ENCODE measurements at regions of chr12 and their contacts with region 1.

Region 1: DNA sequence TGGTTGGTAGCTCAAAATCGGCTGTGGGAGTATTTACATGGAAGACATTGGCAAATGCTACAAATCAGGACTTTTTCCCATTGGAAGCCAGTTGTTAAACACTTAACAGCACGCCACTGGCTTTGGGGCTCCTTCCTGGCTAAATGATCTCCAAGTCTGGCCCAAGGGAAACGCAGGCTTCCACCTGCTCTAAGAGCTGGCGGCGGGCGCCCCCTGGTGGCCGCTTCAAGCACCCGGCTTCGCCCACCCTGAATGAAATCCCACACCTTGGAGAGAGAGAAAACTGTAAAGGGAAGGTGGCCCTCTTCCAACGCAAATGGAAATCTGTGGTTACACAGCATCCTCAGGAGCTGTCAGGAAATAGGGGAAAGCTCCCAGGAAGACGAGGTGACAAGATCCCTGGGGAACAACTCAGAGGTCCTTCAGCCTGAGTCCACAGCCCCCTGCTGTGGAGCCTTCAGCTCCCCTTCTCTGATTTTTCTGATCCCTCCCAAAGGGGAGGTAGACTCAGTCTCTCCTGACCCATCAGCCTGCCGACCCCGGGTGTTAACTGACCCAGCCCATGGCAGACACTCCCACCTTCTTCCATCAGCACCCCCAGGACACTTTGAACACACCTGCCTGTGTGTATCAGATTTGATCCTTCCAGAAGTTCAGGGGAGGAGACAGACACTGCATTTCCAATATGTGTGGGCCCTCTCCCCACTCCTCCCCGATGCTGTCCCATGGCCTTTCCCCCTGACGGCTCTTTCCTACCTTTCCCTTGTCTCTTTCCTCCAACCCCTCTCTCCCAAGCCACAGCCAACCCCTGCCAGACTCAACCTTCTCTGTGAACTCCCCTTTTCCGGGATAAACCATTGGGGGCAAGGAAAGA is 15.4 kb downstream of the SELPLG start:
- DNase-seq: peak; percentile 68 to 82 (median 75)
- H3K4me3 ChIP-seq: no peak overlapping the region
- H3K4me3 Mint-ChIP-seq: peak overlapping the region; percentile 9 to 50 (median 37)
- H3K27ac ChIP-seq: no peak overlapping the region
- H3K27ac Mint-ChIP-seq: peak overlapping the region; percentile 83 to 100 (median 96)
- H3K4me1 ChIP-seq: peaks cover 56% of the 10 kb centered on the region
- H3K4me1 Mint-ChIP-seq: peaks cover 62 to 83% (median 70%) of the 10 kb centered on the region in 3 donors
- H3K27me3 ChIP-seq: no peaks in the 10 kb centered on the region
- H3K27me3 Mint-ChIP-seq: no peaks in the 10 kb centered on the region

Region 2: GRCh38 chr12:108562348-108563135 is 55.8 kb before region 1 on chr12 and contains the start of gene ISCU:
- CTCF ChIA-PET with region 1: interaction called, 206 read pairs
- POLR2A ChIA-PET with region 1: interaction called, 34 read pairs
- DNase-seq: peak; percentile 98 to 100 (median 99)
- H3K4me3 ChIP-seq: peak within 1 kb of the TSS; percentile 96
- H3K4me3 Mint-ChIP-seq: peak within 1 kb of the TSS; percentile 98 to 100 (median 100)
- H3K27ac ChIP-seq: peak within 1 kb of the TSS; percentile 93
- H3K27ac Mint-ChIP-seq: peak within 1 kb of the TSS; percentile 97 to 100 (median 100)
- H3K4me1 ChIP-seq: peaks cover 59% of the 10 kb centered on the region
- H3K4me1 Mint-ChIP-seq: peaks cover 50 to 83% (median 76%) of the 10 kb centered on the region in 3 donors
- H3K27me3 ChIP-seq: no peaks in the 10 kb centered on the region
- H3K27me3 Mint-ChIP-seq: no peaks in the 10 kb centered on the region
- total RNA-seq, gene ISCU: 113 to 116 TPM

Region 3: GRCh38 chr12:108570743-108571608 is 47.3 kb before region 1 on chr12:
- CTCF ChIA-PET with region 1: interaction called, 206 read pairs
- POLR2A ChIA-PET with region 1: interaction called, 11 read pairs
- DNase-seq: no peak
- H3K4me3 ChIP-seq: no peak overlapping the region
- H3K4me3 Mint-ChIP-seq: no peak overlapping the region
- H3K27ac ChIP-seq: no peak overlapping the region
- H3K27ac Mint-ChIP-seq: peak overlapping the region; percentile 61 to 95 (median 86)
- H3K4me1 ChIP-seq: peaks cover 56% of the 10 kb centered on the region
- H3K4me1 Mint-ChIP-seq: peaks cover 26 to 86% (median 71%) of the 10 kb centered on the region in 3 donors
- H3K27me3 ChIP-seq: no peaks in the 10 kb centered on the region
- H3K27me3 Mint-ChIP-seq: no peaks in the 10 kb centered on the region

Region 4: GRCh38 chr12:108643941-108644810 is 25.9 kb after region 1 on chr12:
- CTCF ChIA-PET with region 1: interaction called, 330 read pairs
- POLR2A ChIA-PET with region 1: interaction called, 13 read pairs
- DNase-seq: no peak
- H3K4me3 ChIP-seq: no peak overlapping the region
- H3K4me3 Mint-ChIP-seq: no peak overlapping the region
- H3K27ac ChIP-seq: no peak overlapping the region
- H3K27ac Mint-ChIP-seq: peak overlapping the region in 1 of 8 donors; percentile 60
- H3K4me1 ChIP-seq: peaks cover 20% of the 10 kb centered on the region
- H3K4me1 Mint-ChIP-seq: peaks cover 17 to 32% (median 29%) of the 10 kb centered on the region in 3 donors
- H3K27me3 ChIP-seq: no peaks in the 10 kb centered on the region
- H3K27me3 Mint-ChIP-seq: no peaks in the 10 kb centered on the region

Region 5: GRCh38 chr12:108803428-108804105 is 185.3 kb after region 1 on chr12:
- CTCF ChIA-PET with region 1: interaction called, 44 read pairs
- POLR2A ChIA-PET with region 1: no interaction called
- DNase-seq: peak; percentile 50 to 78 (median 65)
- H3K4me3 ChIP-seq: no peak overlapping the region
- H3K4me3 Mint-ChIP-seq: no peak overlapping the region
- H3K27ac ChIP-seq: no peak overlapping the region
- H3K27ac Mint-ChIP-seq: peak overlapping the region in 3 of 8 donors; percentile 33 to 63 (median 50)
- H3K4me1 ChIP-seq: peaks cover 5% of the 10 kb centered on the region
- H3K4me1 Mint-ChIP-seq: peaks cover 4 to 8% (median 5%) of the 10 kb centered on the region in 3 donors
- H3K27me3 ChIP-seq: no peaks in the 10 kb centered on the region
- H3K27me3 Mint-ChIP-seq: no peaks in the 10 kb centered on the region

Measured in CD8-positive, alpha-beta memory T cell (primary cell).